ENCODE measurements at regions of chr20 and their contacts with region 1.

Region 1: GRCh38 chr20:24257171-24257570 is 212.3 kb upstream of the SYNDIG1 start:
- DNase-seq: no peak
- H3K4me3 ChIP-seq: no peak overlapping the region
- H3K27ac ChIP-seq: no peak overlapping the region
- H3K4me1 ChIP-seq: no peaks in the 10 kb centered on the region
- H3K27me3 ChIP-seq: no peaks in the 10 kb centered on the region
- CTCF ChIP-seq: no peak

Region 2: GRCh38 chr20:24318569-24319352 is 61.6 kb after region 1 on chr20:
- intact Hi-C with region 1: loop called (anchors 10 kb)
- DNase-seq: no peak
- H3K4me3 ChIP-seq: no peak overlapping the region
- H3K27ac ChIP-seq: no peak overlapping the region
- H3K4me1 ChIP-seq: no peaks in the 10 kb centered on the region
- H3K27me3 ChIP-seq: no peaks in the 10 kb centered on the region
- CTCF ChIP-seq: no peak